ENCODE measurements at regions of chr18 and their contacts with region 1.

Region 1: DNA sequence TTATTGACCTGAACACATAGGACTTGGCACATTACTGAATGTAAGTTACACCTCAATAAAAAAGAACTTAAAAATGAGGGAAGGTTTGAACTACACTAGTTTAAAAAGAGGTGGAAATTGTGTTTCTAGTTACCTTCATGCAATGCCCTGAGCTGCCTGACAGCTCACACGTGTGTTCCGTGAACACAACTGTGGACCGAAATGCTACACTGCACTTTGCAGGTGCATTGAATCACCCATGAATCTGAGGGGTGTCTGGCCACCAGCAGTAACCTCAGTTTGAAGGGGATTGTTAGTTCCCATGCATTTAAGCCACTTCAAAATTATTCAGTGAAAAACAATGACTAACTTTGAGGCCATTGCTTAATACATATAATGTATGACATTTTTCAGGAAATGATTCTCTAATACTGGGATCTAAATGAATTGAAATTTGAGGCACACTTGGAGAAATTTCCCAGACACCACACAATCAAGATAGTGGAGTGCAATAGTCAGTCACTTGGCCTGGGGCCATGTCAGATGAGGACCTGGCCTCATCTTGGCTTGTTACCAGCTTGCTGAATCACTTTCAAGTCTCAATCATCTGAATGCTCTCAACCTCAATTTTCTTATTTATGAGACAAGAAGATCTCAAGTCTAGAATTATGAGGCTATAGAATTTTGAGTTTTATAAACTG is 59.3 kb downstream of the MYL12B start:
- DNase-seq: no peak
- ATAC-seq: no peak
- H3K4me3 ChIP-seq: no peak overlapping the region
- H3K27ac ChIP-seq: no peak overlapping the region
- H3K4me1 ChIP-seq: peaks cover 0 to 21% (median 0%) of the 10 kb centered on the region in 9 donors
- H3K27me3 ChIP-seq: peaks cover 0 to 5% (median 0%) of the 10 kb centered on the region in 7 donors
- CTCF ChIP-seq: no peak

Region 2: GRCh38 chr18:3379685-3380084 is 58.4 kb after region 1 on chr18:
- intact Hi-C with region 1: loop called in 1 of 10 experiments (anchors 10 kb)
- DNase-seq: no peak
- ATAC-seq: no peak
- H3K4me3 ChIP-seq: no peak overlapping the region
- H3K27ac ChIP-seq: no peak overlapping the region
- H3K4me1 ChIP-seq: no peaks in the 10 kb centered on the region
- H3K27me3 ChIP-seq: peaks cover 0 to 4% (median 0%) of the 10 kb centered on the region in 7 donors
- CTCF ChIP-seq: no peak

Region 3: DNA sequence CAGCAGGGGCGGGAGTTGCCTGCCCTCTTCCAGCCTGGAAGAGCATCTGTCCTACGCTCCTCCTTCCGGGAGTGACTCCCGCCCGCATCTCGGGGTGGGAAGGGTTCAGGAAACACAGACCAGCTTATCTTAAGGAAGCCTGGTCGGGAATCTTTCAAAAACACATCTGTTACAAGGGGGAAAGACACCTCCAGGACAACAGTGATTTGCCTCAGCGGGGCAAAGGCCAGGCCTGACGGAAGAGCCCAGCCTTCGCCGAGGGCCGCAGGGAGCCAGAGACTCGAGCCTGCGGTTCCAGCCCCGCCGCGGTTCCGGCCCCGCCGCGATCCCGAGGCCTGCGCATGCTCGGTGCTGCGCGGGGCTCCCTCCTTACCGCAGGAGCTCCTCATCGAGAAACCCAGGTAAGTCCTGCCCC is 90.6 kb after region 1 on chr18:
- intact Hi-C with region 1: loop called in 1 of 10 experiments (anchors 10 kb)
- DNase-seq: peak; percentile 5 to 38
- ATAC-seq: peak in 6 of 8 donors; percentile 44 to 72 (median 60)
- H3K4me3 ChIP-seq: peak overlapping the region in 9 of 10 donors; percentile 26 to 50 (median 46)
- H3K27ac ChIP-seq: no peak overlapping the region
- H3K4me1 ChIP-seq: no peaks in the 10 kb centered on the region
- H3K27me3 ChIP-seq: peaks cover 0 to 13% (median 6%) of the 10 kb centered on the region in 7 donors
- CTCF ChIP-seq: no peak

Region 4: GRCh38 chr18:3434685-3435084 is 113.4 kb after region 1 on chr18:
- intact Hi-C with region 1: loop called in 1 of 10 experiments (anchors 10 kb)
- DNase-seq: no peak
- ATAC-seq: no peak
- H3K4me3 ChIP-seq: no peak overlapping the region
- H3K27ac ChIP-seq: no peak overlapping the region
- H3K4me1 ChIP-seq: no peaks in the 10 kb centered on the region
- H3K27me3 ChIP-seq: no peaks in the 10 kb centered on the region
- CTCF ChIP-seq: no peak

Region 5: GRCh38 chr18:3869848-3870247 is 548.6 kb after region 1 on chr18:
- intact Hi-C with region 1: no loop called
- DNase-seq: no peak
- ATAC-seq: peak in 5 of 8 donors; percentile 33 to 79 (median 61)
- H3K4me3 ChIP-seq: no peak overlapping the region
- H3K27ac ChIP-seq: no peak overlapping the region
- H3K4me1 ChIP-seq: peaks cover 0 to 26% (median 4%) of the 10 kb centered on the region in 9 donors
- H3K27me3 ChIP-seq: no peaks in the 10 kb centered on the region
- CTCF ChIP-seq: peak; percentile 11 to 64 (median 49)